Upper lobe of right lung (tissue), 1 donor: ENCODE measurements at regions of chr16 and their contacts with region 1.

Region 1: GRCh38 chr16:88941913-88942909 is 34.8 kb downstream of the CBFA2T3 start:
- DNase-seq: no peak
- ATAC-seq: peak; percentile 69
- H3K4me3 ChIP-seq: peak overlapping the region; percentile 34
- H3K27ac ChIP-seq: no peak overlapping the region
- H3K4me1 ChIP-seq: peaks cover 18% of the 10 kb centered on the region
- H3K27me3 ChIP-seq: peaks cover 14% of the 10 kb centered on the region
- CTCF ChIP-seq: peak; percentile 53

Region 2: GRCh38 chr16:88886845-88887521 is 55.2 kb before region 1 on chr16:
- intact Hi-C with region 1: no loop called
- DNase-seq: peak; percentile 76
- ATAC-seq: peak; percentile 50
- H3K4me3 ChIP-seq: no peak overlapping the region
- H3K27ac ChIP-seq: peak overlapping the region; percentile 79
- H3K4me1 ChIP-seq: peaks cover 4% of the 10 kb centered on the region
- H3K27me3 ChIP-seq: no peaks in the 10 kb centered on the region
- CTCF ChIP-seq: no peak

Region 3: DNA sequence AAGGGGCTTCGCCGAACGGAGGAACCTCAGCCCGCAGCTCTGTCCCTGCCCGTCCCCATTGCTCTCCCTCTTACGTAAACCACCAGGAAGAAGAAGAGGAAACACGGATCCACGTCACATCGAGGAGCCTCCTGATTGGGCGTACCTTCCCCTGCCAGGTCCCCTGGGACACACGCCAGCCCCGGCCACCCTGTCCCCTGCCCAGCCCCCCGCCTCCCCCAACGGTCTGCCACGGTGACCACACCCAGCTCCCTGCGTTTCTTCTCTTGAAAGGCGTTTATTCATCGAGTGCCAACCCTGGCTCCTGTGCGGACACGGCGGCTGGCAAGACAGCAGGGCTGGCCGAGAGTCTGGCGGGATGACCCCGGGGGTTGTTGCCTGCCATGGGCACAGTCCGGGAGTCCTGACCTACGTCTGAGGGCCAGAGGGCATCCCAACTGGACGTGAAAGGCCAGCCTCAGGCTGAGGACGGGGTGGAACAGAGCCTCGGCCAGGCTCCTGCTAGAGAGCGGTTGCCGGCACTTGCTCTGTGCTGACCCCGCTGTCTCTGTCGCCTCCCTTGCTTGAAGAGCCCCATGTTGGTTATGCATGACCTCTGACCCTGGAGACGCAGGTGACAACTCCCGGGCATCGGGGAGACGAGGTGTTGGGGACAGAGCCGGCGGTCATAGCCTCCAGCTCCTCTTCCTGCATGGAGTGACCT is 110.8 kb after region 1 on chr16:
- intact Hi-C with region 1: no loop called
- DNase-seq: no peak
- ATAC-seq: peak; percentile 49
- H3K4me3 ChIP-seq: peak overlapping the region; percentile 21
- H3K27ac ChIP-seq: no peak overlapping the region
- H3K4me1 ChIP-seq: no peaks in the 10 kb centered on the region
- H3K27me3 ChIP-seq: peaks cover 47% of the 10 kb centered on the region
- CTCF ChIP-seq: no peak

Region 4: GRCh38 chr16:89123031-89123830 is 181.0 kb after region 1 on chr16:
- intact Hi-C with region 1: no loop called
- DNase-seq: peak; percentile 59
- ATAC-seq: no peak
- H3K4me3 ChIP-seq: no peak overlapping the region
- H3K27ac ChIP-seq: no peak overlapping the region
- H3K4me1 ChIP-seq: no peaks in the 10 kb centered on the region
- H3K27me3 ChIP-seq: no peaks in the 10 kb centered on the region
- CTCF ChIP-seq: no peak

Region 5: DNA sequence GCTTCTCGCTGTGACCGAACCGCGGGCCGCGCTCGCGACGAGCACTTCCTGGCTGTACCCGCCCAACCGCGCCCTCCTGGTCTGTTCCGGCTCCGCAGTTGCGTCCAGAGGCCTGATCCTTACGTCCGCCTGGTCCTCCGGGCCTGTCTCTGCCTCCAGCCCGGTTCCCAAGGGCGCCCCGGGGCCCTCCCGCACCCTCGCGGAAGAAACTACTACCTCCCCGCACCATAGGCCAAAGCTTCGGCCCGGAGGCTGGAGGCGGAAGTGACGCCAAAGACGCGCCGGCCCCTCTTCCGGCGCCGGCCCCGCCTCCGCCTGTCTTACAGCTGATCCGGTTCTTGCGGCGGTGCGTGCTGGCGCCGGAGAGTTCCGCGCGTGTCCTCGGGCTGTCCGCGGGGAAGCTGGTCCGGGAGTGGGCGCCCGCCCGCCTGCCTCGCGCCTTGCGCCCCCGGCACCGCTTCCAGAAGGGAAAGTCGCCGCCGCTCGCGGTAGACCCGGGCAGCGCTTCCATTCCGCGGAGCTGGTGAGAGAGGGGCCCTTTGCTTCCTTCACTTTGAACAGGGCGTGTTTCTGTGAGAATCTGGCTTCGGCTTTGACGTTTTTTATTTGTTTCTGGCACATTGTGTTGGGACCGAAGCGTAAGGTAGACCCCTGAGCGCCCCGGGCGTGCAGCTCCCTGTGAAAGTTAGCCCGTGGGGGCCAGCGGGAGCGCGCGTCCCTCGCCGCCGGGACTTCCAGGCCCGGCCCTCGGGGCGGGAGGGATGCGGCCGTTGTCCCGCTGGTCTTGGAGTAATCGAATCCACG is 275.4 kb after region 1 on chr16 and contains the start of gene ZNF778:
- intact Hi-C with region 1: loop called (anchors 10 kb)
- DNase-seq: peak; percentile 92
- ATAC-seq: peak; percentile 97
- H3K4me3 ChIP-seq: peak within 1 kb of the TSS; percentile 72
- H3K27ac ChIP-seq: peak within 1 kb of the TSS; percentile 93
- H3K4me1 ChIP-seq: peaks cover 23% of the 10 kb centered on the region
- H3K27me3 ChIP-seq: no peaks in the 10 kb centered on the region
- CTCF ChIP-seq: no peak
- total RNA-seq, gene ZNF778: 10.3 TPM